B cell (primary cell): ENCODE measurements at regions of chr1 and their contacts with region 1.

Region 1: DNA sequence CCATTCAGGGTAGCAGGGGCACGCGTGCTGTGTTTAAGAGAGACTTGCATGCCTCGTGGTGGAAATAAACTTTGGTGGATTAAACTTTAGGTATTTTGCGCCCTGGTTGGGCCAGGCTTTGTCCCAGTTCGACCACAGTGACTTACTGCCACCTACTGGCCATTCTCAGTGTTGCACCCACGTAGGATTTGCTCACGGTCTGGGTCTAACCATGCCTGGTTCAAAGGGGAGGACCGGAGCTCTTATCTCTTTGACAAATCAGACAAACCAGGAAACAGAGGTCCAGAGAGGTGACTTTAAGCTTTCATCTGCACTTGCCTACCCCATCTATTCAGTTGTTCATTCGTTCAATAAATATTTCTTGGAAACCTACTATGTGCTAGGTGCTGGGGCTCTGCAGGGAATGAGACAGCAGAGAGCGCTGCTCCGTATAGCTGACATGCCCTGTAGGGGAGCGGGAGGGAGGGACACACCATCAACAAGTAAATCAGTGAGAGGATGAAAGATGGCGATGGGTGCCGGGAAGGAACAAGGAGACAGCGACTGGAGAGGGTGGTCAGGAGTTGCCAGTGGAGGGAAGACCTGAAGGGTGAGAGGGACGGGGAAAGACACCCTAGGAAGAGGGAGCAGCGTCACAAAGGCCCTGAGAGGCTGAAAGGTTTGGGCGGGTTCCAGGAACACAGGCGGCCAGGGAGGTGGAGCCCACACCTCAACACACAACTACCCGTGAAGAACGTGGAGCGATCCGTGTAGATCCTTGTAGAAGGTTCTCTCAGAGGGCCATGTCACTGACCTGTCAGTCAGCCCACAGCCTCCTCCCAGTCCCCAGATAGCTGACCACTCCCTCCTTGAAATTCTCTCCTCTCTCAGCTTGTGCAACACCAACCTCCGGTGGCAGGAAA is 27.2 kb upstream of the TINAGL1 start:
- DNase-seq: peak; percentile 89
- ATAC-seq: peak; percentile 98
- H3K4me3 ChIP-seq: no peak overlapping the region
- H3K4me3 Mint-ChIP-seq: peak overlapping the region; percentile 29
- H3K27ac ChIP-seq: no peak overlapping the region
- H3K27ac Mint-ChIP-seq: no peak overlapping the region
- H3K4me1 ChIP-seq: peaks cover 6 to 11% of the 10 kb centered on the region in 2 donors
- H3K4me1 Mint-ChIP-seq: peaks cover 10% of the 10 kb centered on the region
- H3K27me3 ChIP-seq: peaks cover 0 to 6% (median 2%) of the 10 kb centered on the region in 4 experiments
- H3K27me3 Mint-ChIP-seq: peaks cover 11% of the 10 kb centered on the region
- CTCF ChIP-seq: peak; percentile 94

Region 2: GRCh38 chr1:31166462-31166861 is 382.7 kb before region 1 on chr1:
- CTCF ChIA-PET with region 1: interaction called, 11 read pairs
- POLR2A ChIA-PET with region 1: no interaction called
- intact Hi-C with region 1: loop called (anchors 1 kb)
- DNase-seq: no peak
- ATAC-seq: no peak
- H3K4me3 ChIP-seq: no peak overlapping the region
- H3K4me3 Mint-ChIP-seq: no peak overlapping the region
- H3K27ac ChIP-seq: no peak overlapping the region
- H3K27ac Mint-ChIP-seq: no peak overlapping the region
- H3K4me1 ChIP-seq: no peaks in the 10 kb centered on the region
- H3K4me1 Mint-ChIP-seq: peaks cover 3% of the 10 kb centered on the region
- H3K27me3 ChIP-seq: no peaks in the 10 kb centered on the region
- H3K27me3 Mint-ChIP-seq: peaks cover 10% of the 10 kb centered on the region
- CTCF ChIP-seq: no peak

Region 3: DNA sequence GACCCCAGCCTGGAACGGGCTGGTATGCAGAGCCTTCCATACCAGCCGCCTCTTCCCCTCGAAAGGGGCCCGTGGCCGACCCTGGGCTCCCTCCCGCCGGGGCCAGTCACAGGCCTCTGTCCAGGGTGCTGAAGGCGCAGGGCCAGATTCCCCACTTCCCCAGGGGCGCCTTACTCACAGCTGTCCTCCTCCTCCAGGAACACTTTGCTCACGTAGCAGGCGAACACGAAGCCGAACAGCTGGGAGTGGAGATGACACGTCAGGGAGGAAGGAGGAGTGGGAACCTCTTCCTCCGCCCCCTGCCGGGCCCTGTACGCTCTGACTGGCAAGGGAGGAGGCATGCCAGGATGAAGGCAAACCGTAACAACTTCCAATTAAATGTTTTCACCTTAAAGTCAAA is 366.8 kb before region 1 on chr1:
- CTCF ChIA-PET with region 1: interaction called, 42 read pairs
- POLR2A ChIA-PET with region 1: interaction called, 3 read pairs
- intact Hi-C with region 1: no loop called
- DNase-seq: peak; percentile 61
- ATAC-seq: peak; percentile 52
- H3K4me3 ChIP-seq: no peak overlapping the region
- H3K4me3 Mint-ChIP-seq: peak overlapping the region; percentile 34
- H3K27ac ChIP-seq: no peak overlapping the region
- H3K27ac Mint-ChIP-seq: no peak overlapping the region
- H3K4me1 ChIP-seq: peaks cover 10 to 15% of the 10 kb centered on the region in 2 donors
- H3K4me1 Mint-ChIP-seq: peaks cover 6% of the 10 kb centered on the region
- H3K27me3 ChIP-seq: peaks cover 0 to 44% (median 14%) of the 10 kb centered on the region in 4 experiments
- H3K27me3 Mint-ChIP-seq: peaks cover 54% of the 10 kb centered on the region
- CTCF ChIP-seq: no peak

Region 4: DNA sequence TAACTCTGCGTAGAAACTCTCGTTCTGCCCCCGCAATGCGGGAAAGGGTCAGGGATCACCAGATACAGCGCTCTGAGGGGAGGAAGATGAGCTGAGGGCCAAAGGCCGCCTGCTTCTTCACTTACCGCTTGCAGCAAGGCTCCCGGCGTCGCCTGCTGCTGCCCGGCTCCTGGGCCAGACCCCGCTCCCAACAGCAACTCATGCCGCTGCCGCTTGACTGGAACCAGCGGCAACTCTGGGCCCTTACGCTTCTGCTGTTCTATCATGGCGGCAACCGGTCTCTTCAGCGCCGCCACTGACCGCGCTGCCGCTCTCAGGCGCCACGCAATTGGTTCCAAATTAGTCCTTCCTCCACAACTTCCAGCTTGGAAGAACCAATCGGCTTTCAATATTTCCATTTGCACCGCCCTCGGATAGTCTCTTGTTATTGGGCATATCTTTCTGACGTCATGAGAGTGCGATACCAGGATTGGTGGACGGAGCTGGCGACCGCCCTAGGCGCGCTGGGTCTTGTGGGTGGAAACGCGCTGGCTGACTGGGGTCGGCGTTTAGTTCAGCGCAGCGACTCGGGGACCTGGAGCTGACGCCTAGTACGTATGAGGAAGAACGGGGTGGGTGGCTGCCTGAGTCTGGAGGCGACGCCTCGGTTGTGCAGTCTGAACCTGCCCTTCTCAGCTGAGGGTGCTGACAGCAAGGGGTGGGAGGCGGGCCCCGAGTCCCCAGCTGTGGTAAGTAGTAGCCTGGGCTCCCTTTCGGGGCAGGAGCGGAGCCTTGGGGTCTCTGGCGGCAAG is 252.5 kb before region 1 on chr1 and contains the starts of genes SNRNP40 and ZCCHC17:
- CTCF ChIA-PET with region 1: interaction called, 3 read pairs
- POLR2A ChIA-PET with region 1: no interaction called
- intact Hi-C with region 1: loop called (anchors 2 kb)
- DNase-seq: peak; percentile 98
- ATAC-seq: peak; percentile 97
- H3K4me3 ChIP-seq: peak within 1 kb of the TSS; percentile 68 to 99 (median 77)
- H3K4me3 Mint-ChIP-seq: no peak within 1 kb of the TSS
- H3K27ac ChIP-seq: peak within 1 kb of the TSS; percentile 82 to 93
- H3K27ac Mint-ChIP-seq: peak within 1 kb of the TSS; percentile 63
- H3K4me1 ChIP-seq: peaks cover 23 to 25% of the 10 kb centered on the region in 2 donors
- H3K4me1 Mint-ChIP-seq: peaks cover 24% of the 10 kb centered on the region
- H3K27me3 ChIP-seq: no peaks in the 10 kb centered on the region
- H3K27me3 Mint-ChIP-seq: no peaks in the 10 kb centered on the region
- CTCF ChIP-seq: no peak
- total RNA-seq, gene SNRNP40: 65.6 and 67.7 TPM in 2 replicates
- total RNA-seq, gene ZCCHC17: 20.3 and 21.5 TPM in 2 replicates

Region 5: DNA sequence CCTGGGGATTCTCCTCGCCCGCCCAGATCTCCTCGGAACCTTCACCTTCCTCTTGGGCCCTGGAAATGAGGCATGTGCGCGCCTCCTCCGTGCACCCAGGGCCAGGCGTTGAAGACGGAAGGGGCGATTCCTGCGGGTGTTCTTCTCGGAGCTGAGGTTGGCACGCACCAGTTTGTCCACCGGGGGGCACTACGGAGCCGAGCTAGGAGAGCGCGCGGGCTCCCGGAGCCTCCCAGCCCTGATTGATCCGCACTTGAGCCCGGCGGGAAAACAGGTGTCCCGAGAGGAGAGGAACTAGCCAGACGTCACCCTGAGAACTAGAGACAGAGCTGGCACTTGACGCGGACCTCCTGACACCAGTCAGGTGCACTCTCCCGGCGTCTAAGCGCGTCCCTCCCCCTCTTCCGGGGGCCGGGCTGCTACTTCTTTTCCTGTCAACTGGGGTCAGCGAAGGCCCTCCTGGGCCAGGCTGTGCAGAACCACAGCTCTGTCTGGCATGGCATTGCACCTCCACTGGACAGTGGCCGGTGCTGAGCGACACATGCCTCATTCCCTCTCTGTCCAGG is 154.4 kb before region 1 on chr1:
- CTCF ChIA-PET with region 1: interaction called, 57 read pairs
- POLR2A ChIA-PET with region 1: no interaction called
- intact Hi-C with region 1: loop called (anchors 1 kb)
- DNase-seq: peak; percentile 87
- ATAC-seq: peak; percentile 93
- H3K4me3 ChIP-seq: peak overlapping the region; percentile 27 to 71 (median 55)
- H3K4me3 Mint-ChIP-seq: peak overlapping the region; percentile 87
- H3K27ac ChIP-seq: no peak overlapping the region
- H3K27ac Mint-ChIP-seq: peak overlapping the region; percentile 26
- H3K4me1 ChIP-seq: peaks cover 8 to 13% of the 10 kb centered on the region in 2 donors
- H3K4me1 Mint-ChIP-seq: peaks cover 13% of the 10 kb centered on the region
- H3K27me3 ChIP-seq: no peaks in the 10 kb centered on the region
- H3K27me3 Mint-ChIP-seq: no peaks in the 10 kb centered on the region
- CTCF ChIP-seq: peak; percentile 91

Region 6: GRCh38 chr1:31564134-31564989 is 15.2 kb after region 1 on chr1:
- CTCF ChIA-PET with region 1: interaction called, 18 read pairs
- POLR2A ChIA-PET with region 1: no interaction called
- intact Hi-C with region 1: no loop called
- DNase-seq: peak; percentile 63
- ATAC-seq: peak; percentile 69
- H3K4me3 ChIP-seq: no peak overlapping the region
- H3K4me3 Mint-ChIP-seq: no peak overlapping the region
- H3K27ac ChIP-seq: no peak overlapping the region
- H3K27ac Mint-ChIP-seq: no peak overlapping the region
- H3K4me1 ChIP-seq: no peaks in the 10 kb centered on the region
- H3K4me1 Mint-ChIP-seq: no peaks in the 10 kb centered on the region
- H3K27me3 ChIP-seq: peaks cover 0 to 4% (median 2%) of the 10 kb centered on the region in 4 experiments
- H3K27me3 Mint-ChIP-seq: peaks cover 33% of the 10 kb centered on the region
- CTCF ChIP-seq: peak; percentile 87

Region 7: GRCh38 chr1:32063261-32063681 is 514.1 kb after region 1 on chr1:
- CTCF ChIA-PET with region 1: no interaction called
- POLR2A ChIA-PET with region 1: no interaction called
- intact Hi-C with region 1: no loop called
- DNase-seq: peak; percentile 56
- ATAC-seq: peak; percentile 53
- H3K4me3 ChIP-seq: no peak overlapping the region
- H3K4me3 Mint-ChIP-seq: no peak overlapping the region
- H3K27ac ChIP-seq: no peak overlapping the region
- H3K27ac Mint-ChIP-seq: no peak overlapping the region
- H3K4me1 ChIP-seq: peaks cover 8 to 11% of the 10 kb centered on the region in 2 donors
- H3K4me1 Mint-ChIP-seq: peaks cover 5% of the 10 kb centered on the region
- H3K27me3 ChIP-seq: no peaks in the 10 kb centered on the region
- H3K27me3 Mint-ChIP-seq: no peaks in the 10 kb centered on the region
- CTCF ChIP-seq: peak; percentile 70